Activated T-helper 2 cell treated with anti-CD3 and anti-CD28 coated beads, Interferon-gamma antibody, Interleukin-2, Interleukin-4, amounts not matched to agents 10 μg/mL and 5 μg/mL and 100 μg/mL, durations not matched to agents 14 hours and 24 hours and 36 hours (primary cell): ENCODE measurements at regions of chr3 and their contacts with region 1.

Region 1: GRCh38 chr3:63863148-63864007 is at the starts of genes ATXN7 and THOC7:
- DNase-seq: peak; percentile 70
- H3K4me3 Mint-ChIP-seq: peak within 1 kb of the TSS; percentile 84
- H3K27ac Mint-ChIP-seq: peak within 1 kb of the TSS; percentile 94
- H3K4me1 Mint-ChIP-seq: peaks cover 46% of the 10 kb centered on the region
- H3K27me3 Mint-ChIP-seq: no peaks in the 10 kb centered on the region
- total RNA-seq, gene ATXN7: 42.8 and 44.0 TPM in 2 replicates
- total RNA-seq, gene THOC7: 103 and 107 TPM in 2 replicates

Region 2: GRCh38 chr3:62965311-62965710 is 898.1 kb before region 1 on chr3:
- intact Hi-C with region 1: no loop called
- DNase-seq: no peak
- H3K4me3 Mint-ChIP-seq: no peak overlapping the region
- H3K27ac Mint-ChIP-seq: no peak overlapping the region
- H3K4me1 Mint-ChIP-seq: no peaks in the 10 kb centered on the region
- H3K27me3 Mint-ChIP-seq: no peaks in the 10 kb centered on the region

Region 3: GRCh38 chr3:63877737-63878393 is 14.5 kb after region 1 on chr3:
- intact Hi-C with region 1: no loop called
- DNase-seq: no peak
- H3K4me3 Mint-ChIP-seq: no peak overlapping the region
- H3K27ac Mint-ChIP-seq: no peak overlapping the region
- H3K4me1 Mint-ChIP-seq: peaks cover 34% of the 10 kb centered on the region
- H3K27me3 Mint-ChIP-seq: no peaks in the 10 kb centered on the region

Region 4: GRCh38 chr3:63911873-63912767 is 48.7 kb after region 1 on chr3 and contains the start of gene SCAANT1:
- intact Hi-C with region 1: loop called (anchors 1 kb)
- DNase-seq: peak; percentile 81
- H3K4me3 Mint-ChIP-seq: peak within 1 kb of the TSS; percentile 94
- H3K27ac Mint-ChIP-seq: peak within 1 kb of the TSS; percentile 97
- H3K4me1 Mint-ChIP-seq: peaks cover 33% of the 10 kb centered on the region
- H3K27me3 Mint-ChIP-seq: no peaks in the 10 kb centered on the region
- total RNA-seq, gene SCAANT1: 1.8 TPM in 1 of 2 replicates, not detected in the other

Region 5: DNA sequence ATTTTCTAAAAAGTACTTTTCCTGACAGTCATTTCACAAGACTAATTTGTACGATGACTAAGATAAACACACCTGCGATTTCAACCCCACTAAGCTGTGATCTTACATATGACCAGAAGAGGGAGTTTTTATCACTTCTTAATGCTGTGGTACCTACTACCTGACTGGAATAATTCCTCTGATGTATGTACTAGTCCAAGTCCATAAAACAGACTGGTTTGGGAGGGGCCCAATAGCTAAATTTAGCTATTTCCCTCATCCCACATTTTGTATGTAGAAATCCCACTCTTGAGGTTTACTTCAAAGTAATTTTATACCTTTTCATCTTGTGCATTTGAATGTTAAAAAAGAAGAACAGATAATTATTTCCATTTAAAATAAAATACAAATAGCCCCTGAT is 98.5 kb after region 1 on chr3:
- intact Hi-C with region 1: loop called (anchors 10 kb)
- DNase-seq: no peak
- H3K4me3 Mint-ChIP-seq: no peak overlapping the region
- H3K27ac Mint-ChIP-seq: no peak overlapping the region
- H3K4me1 Mint-ChIP-seq: peaks cover 44% of the 10 kb centered on the region
- H3K27me3 Mint-ChIP-seq: no peaks in the 10 kb centered on the region

Region 6: GRCh38 chr3:64023187-64023848 is 159.9 kb after region 1 on chr3 and contains the start of gene PSMD6:
- intact Hi-C with region 1: loop called (anchors 10 kb)
- DNase-seq: peak; percentile 91
- H3K4me3 Mint-ChIP-seq: peak within 1 kb of the TSS; percentile 83
- H3K27ac Mint-ChIP-seq: peak within 1 kb of the TSS; percentile 56
- H3K4me1 Mint-ChIP-seq: peaks cover 24% of the 10 kb centered on the region
- H3K27me3 Mint-ChIP-seq: peaks cover 14% of the 10 kb centered on the region
- total RNA-seq, gene PSMD6: 125 and 131 TPM in 2 replicates